Esophagus squamous epithelium (tissue), 5 donors: ENCODE measurements at regions of chr17 and their contacts with region 1.

Region 1: DNA sequence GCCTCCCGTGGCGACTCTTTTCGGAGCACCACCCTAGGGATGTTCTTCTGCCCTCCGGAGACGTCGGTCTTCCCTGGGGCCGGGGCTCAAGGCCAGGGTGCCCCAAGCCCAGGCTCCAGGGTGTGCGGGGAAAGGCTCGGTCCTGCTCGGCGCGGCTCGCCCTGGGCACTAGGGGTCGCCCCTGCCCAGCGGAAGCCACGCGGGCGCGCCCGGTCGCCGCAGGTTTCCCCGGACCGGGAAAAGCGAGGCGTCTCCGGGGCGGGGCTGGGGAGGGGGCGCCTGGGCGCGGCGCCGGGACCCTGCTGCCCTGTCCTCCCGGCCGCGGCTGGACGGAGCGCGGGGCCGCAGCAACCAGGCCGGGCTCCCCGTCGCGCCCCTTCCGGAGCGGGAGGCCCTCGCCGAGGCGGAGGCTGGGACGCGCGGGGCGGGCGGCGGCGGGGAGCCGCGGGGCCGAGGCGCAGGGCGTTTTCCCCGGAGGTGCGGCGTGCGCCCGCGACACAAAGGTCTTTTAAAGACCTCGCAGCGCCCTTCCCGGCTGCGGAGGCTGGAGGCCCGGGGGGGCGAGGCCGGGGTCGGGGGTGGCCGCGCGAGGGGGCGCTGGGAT is 76.4 kb downstream of the MRC2 start:
- DNase-seq: no peak
- H3K4me3 ChIP-seq: peak overlapping the region; percentile 53 to 91 (median 72)
- H3K27ac ChIP-seq: peak overlapping the region; percentile 66 to 91 (median 85)
- H3K4me1 ChIP-seq: peaks cover 5 to 45% (median 21%) of the 10 kb centered on the region in 3 donors
- H3K27me3 ChIP-seq: peaks cover 0 to 7% (median 0%) of the 10 kb centered on the region in 4 donors
- CTCF ChIP-seq: peak; percentile 70 to 92 (median 81)
- POLR2A ChIP-seq: no peak

Region 2: GRCh38 chr17:62592341-62593099 is 111.4 kb before region 1 on chr17:
- intact Hi-C with region 1: no loop called
- DNase-seq: no peak
- H3K4me3 ChIP-seq: no peak overlapping the region
- H3K27ac ChIP-seq: no peak overlapping the region
- H3K4me1 ChIP-seq: peaks cover 0 to 3% (median 0%) of the 10 kb centered on the region in 3 donors
- H3K27me3 ChIP-seq: no peaks in the 10 kb centered on the region
- CTCF ChIP-seq: no peak
- POLR2A ChIP-seq: no peak

Region 3: DNA sequence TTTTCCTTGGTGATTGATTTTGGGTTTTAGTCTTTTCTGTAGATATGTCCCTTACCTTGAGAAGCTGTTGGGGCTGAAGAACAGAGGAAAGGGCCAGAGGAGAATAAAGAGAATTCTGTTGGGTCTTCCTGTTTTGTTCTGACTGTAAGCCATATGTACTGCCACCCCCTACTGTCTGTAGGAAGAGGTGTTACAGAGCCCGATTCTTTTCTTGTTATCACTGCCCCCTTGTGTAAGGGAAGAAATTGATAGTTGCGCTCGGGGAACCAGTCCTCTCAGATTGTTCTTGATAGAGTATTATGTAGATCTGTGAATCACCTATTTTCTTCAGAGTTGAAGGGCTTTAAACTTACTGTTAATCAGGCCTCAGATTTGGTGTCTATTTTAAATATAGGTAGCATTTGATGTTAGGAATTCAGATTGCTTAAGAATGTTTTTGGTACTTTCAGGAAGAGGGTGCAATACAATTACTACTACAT is 264.6 kb after region 1 on chr17:
- intact Hi-C with region 1: loop called (anchors 5 kb)
- DNase-seq: no peak
- H3K4me3 ChIP-seq: peak overlapping the region in 1 of 4 donors; percentile 7
- H3K27ac ChIP-seq: no peak overlapping the region
- H3K4me1 ChIP-seq: peaks cover 0 to 35% (median 10%) of the 10 kb centered on the region in 3 donors
- H3K27me3 ChIP-seq: no peaks in the 10 kb centered on the region
- CTCF ChIP-seq: peak; percentile 69 to 93 (median 86)
- POLR2A ChIP-seq: no peak